CD4-positive, alpha-beta T cell (primary cell): ENCODE measurements at regions of chr4 and their contacts with region 1.

Region 1: GRCh38 chr4:109574102-109574850 is 14.2 kb downstream of the MCUB start:
- DNase-seq: peak in 5 of 14 experiments; percentile 3 to 67 (median 54)
- ATAC-seq: peak; percentile 83
- H3K4me3 ChIP-seq: no peak overlapping the region
- H3K4me3 Mint-ChIP-seq: peak overlapping the region; percentile 63
- H3K27ac ChIP-seq: no peak overlapping the region
- H3K27ac Mint-ChIP-seq: peak overlapping the region; percentile 55
- H3K4me1 ChIP-seq: peaks cover 25% of the 10 kb centered on the region
- H3K4me1 Mint-ChIP-seq: peaks cover 83% of the 10 kb centered on the region
- H3K27me3 ChIP-seq: no peaks in the 10 kb centered on the region
- H3K27me3 Mint-ChIP-seq: no peaks in the 10 kb centered on the region
- CTCF ChIP-seq: peak; percentile 34

Region 2: DNA sequence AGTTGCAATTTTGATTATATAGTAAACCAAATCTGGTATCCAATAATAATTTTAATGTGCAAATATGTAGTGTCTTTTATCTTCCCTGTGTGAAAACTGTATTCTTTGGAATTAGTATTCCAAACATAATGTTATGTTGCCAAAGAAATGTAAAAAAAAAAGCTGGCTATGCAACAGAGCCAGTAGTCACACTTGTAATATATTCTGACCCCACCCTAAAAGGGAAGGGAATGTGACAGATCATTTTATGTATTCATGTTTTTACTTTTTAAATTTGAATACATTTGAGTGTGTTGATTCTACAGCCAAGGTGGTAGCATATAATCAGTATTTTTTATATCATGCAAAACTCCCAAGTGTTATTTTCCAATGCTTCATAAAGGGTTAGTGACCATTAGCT is 42.1 kb before region 1 on chr4:
- CTCF ChIA-PET with region 1: no interaction called
- POLR2A ChIA-PET with region 1: interaction called, 3 read pairs
- intact Hi-C with region 1: loop called in 1 of 2 experiments (anchors 10 kb)
- DNase-seq: no peak
- ATAC-seq: no peak
- H3K4me3 ChIP-seq: no peak overlapping the region
- H3K4me3 Mint-ChIP-seq: no peak overlapping the region
- H3K27ac ChIP-seq: no peak overlapping the region
- H3K27ac Mint-ChIP-seq: no peak overlapping the region
- H3K4me1 ChIP-seq: no peaks in the 10 kb centered on the region
- H3K4me1 Mint-ChIP-seq: no peaks in the 10 kb centered on the region
- H3K27me3 ChIP-seq: no peaks in the 10 kb centered on the region
- H3K27me3 Mint-ChIP-seq: no peaks in the 10 kb centered on the region
- CTCF ChIP-seq: no peak

Region 3: DNA sequence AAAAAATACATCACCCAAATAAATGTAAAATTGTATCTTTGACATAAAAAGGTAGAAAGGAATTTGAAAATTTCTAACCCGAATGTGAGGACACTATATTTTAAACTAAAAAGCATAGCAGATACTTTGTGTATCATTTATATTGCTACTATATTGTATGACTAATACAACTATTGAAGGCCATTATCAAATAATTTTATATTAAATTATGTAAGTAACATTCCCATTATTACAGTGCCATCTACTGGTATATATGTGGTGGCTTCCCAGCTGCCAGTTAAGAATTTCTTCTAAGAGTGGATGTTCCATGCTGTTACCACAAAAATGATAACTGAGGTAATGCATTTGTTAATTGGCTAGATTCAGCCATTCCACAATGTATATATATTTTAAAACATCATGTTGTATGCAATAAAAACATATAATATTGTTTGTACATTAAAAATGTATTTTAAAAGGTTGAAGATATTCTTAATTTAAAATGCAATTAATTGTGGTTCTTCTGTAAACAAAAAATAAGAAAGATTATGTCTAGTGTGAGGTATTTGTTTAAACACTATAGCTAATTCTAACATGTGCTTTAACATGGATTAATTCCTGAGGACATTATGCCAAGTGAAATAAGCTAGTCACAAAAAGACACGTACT is 403.7 kb after region 1 on chr4:
- CTCF ChIA-PET with region 1: no interaction called
- POLR2A ChIA-PET with region 1: no interaction called
- intact Hi-C with region 1: loop called in 1 of 2 experiments (anchors 10 kb)
- DNase-seq: peak in 3 of 14 experiments; percentile 42 to 43 (median 43)
- ATAC-seq: no peak
- H3K4me3 ChIP-seq: no peak overlapping the region
- H3K4me3 Mint-ChIP-seq: no peak overlapping the region
- H3K27ac ChIP-seq: no peak overlapping the region
- H3K27ac Mint-ChIP-seq: no peak overlapping the region
- H3K4me1 ChIP-seq: no peaks in the 10 kb centered on the region
- H3K4me1 Mint-ChIP-seq: no peaks in the 10 kb centered on the region
- H3K27me3 ChIP-seq: peaks cover 3 to 20% of the 10 kb centered on the region in 2 experiments
- H3K27me3 Mint-ChIP-seq: peaks cover 25% of the 10 kb centered on the region
- CTCF ChIP-seq: peak; percentile 73

Region 4: DNA sequence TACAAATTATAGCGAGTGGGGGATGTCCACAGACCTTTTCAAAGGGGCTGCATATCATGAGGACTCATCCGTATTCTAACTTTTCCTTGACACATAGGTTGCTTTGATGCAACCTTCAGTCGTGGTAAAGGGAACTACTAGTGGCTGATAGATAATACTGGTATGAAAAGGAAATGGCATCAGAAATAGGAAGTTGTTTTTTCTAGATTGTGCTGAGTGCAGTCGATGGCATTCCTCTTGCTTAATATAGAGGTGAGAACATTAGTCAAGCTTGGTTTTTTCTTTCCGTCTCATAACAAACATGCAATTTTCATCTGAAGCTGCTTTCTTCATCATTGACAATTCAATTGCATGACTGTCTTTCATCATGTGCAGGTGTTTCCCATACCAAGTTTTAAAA is 918.2 kb after region 1 on chr4:
- CTCF ChIA-PET with region 1: no interaction called
- POLR2A ChIA-PET with region 1: no interaction called
- intact Hi-C with region 1: loop called in 1 of 2 experiments (anchors 5 kb)
- DNase-seq: peak in 3 of 14 experiments; percentile 13 to 42 (median 15)
- ATAC-seq: no peak
- H3K4me3 ChIP-seq: no peak overlapping the region
- H3K4me3 Mint-ChIP-seq: no peak overlapping the region
- H3K27ac ChIP-seq: no peak overlapping the region
- H3K27ac Mint-ChIP-seq: no peak overlapping the region
- H3K4me1 ChIP-seq: no peaks in the 10 kb centered on the region
- H3K4me1 Mint-ChIP-seq: no peaks in the 10 kb centered on the region
- H3K27me3 ChIP-seq: peaks cover 0 to 3% of the 10 kb centered on the region in 2 experiments
- H3K27me3 Mint-ChIP-seq: peaks cover 34% of the 10 kb centered on the region
- CTCF ChIP-seq: no peak